ENCODE measurements at regions of chr2 and their contacts with region 1.

Region 1: GRCh38 chr2:43158259-43158880 is 68.0 kb downstream of the ZFP36L2 start:
- DNase-seq: peak in 5 of 9 experiments; percentile 53 to 81 (median 64)
- ATAC-seq: peak; percentile 48
- H3K4me3 ChIP-seq: peak overlapping the region; percentile 9 to 16
- H3K4me3 Mint-ChIP-seq: peak overlapping the region; percentile 75
- H3K27ac ChIP-seq: peak overlapping the region; percentile 60 to 90
- H3K27ac Mint-ChIP-seq: peak overlapping the region; percentile 96
- H3K4me1 ChIP-seq: peaks cover 88% of the 10 kb centered on the region
- H3K4me1 Mint-ChIP-seq: peaks cover 85% of the 10 kb centered on the region
- H3K27me3 ChIP-seq: no peaks in the 10 kb centered on the region
- H3K27me3 Mint-ChIP-seq: no peaks in the 10 kb centered on the region
- CTCF ChIP-seq: no peak

Region 2: GRCh38 chr2:42532397-42532796 is 626.0 kb before region 1 on chr2:
- CTCF ChIA-PET with region 1: no interaction called
- POLR2A ChIA-PET with region 1: no interaction called
- intact Hi-C with region 1: no loop called
- DNase-seq: no peak
- ATAC-seq: no peak
- H3K4me3 ChIP-seq: no peak overlapping the region
- H3K4me3 Mint-ChIP-seq: no peak overlapping the region
- H3K27ac ChIP-seq: no peak overlapping the region
- H3K27ac Mint-ChIP-seq: no peak overlapping the region
- H3K4me1 ChIP-seq: no peaks in the 10 kb centered on the region
- H3K4me1 Mint-ChIP-seq: no peaks in the 10 kb centered on the region
- H3K27me3 ChIP-seq: no peaks in the 10 kb centered on the region
- H3K27me3 Mint-ChIP-seq: no peaks in the 10 kb centered on the region
- CTCF ChIP-seq: no peak

Region 3: GRCh38 chr2:43136876-43137275 is 21.5 kb before region 1 on chr2:
- CTCF ChIA-PET with region 1: interaction called, 5 read pairs
- POLR2A ChIA-PET with region 1: interaction called, 7 read pairs
- intact Hi-C with region 1: loop called (anchors 1 kb)
- DNase-seq: peak; percentile 68 to 97 (median 84)
- ATAC-seq: peak; percentile 67
- H3K4me3 ChIP-seq: peak overlapping the region in 1 of 2 experiments; percentile 3
- H3K4me3 Mint-ChIP-seq: peak overlapping the region; percentile 62
- H3K27ac ChIP-seq: peak overlapping the region; percentile 88 to 90
- H3K27ac Mint-ChIP-seq: peak overlapping the region; percentile 100
- H3K4me1 ChIP-seq: peaks cover 95% of the 10 kb centered on the region
- H3K4me1 Mint-ChIP-seq: peaks cover 85% of the 10 kb centered on the region
- H3K27me3 ChIP-seq: no peaks in the 10 kb centered on the region
- H3K27me3 Mint-ChIP-seq: no peaks in the 10 kb centered on the region
- CTCF ChIP-seq: peak; percentile 21

Region 4: GRCh38 chr2:43169987-43170386 is 11.6 kb after region 1 on chr2:
- CTCF ChIA-PET with region 1: interaction called, 41 read pairs
- POLR2A ChIA-PET with region 1: interaction called, 6 read pairs
- intact Hi-C with region 1: loop called (anchors 1 kb)
- DNase-seq: peak; percentile 54 to 86 (median 72)
- ATAC-seq: peak; percentile 15
- H3K4me3 ChIP-seq: peak overlapping the region; percentile 27 to 32
- H3K4me3 Mint-ChIP-seq: peak overlapping the region; percentile 86
- H3K27ac ChIP-seq: peak overlapping the region; percentile 47 to 67
- H3K27ac Mint-ChIP-seq: peak overlapping the region; percentile 99
- H3K4me1 ChIP-seq: peaks cover 70% of the 10 kb centered on the region
- H3K4me1 Mint-ChIP-seq: peaks cover 82% of the 10 kb centered on the region
- H3K27me3 ChIP-seq: no peaks in the 10 kb centered on the region
- H3K27me3 Mint-ChIP-seq: no peaks in the 10 kb centered on the region
- CTCF ChIP-seq: peak; percentile 59

Region 5: GRCh38 chr2:43194121-43194869 is 35.9 kb after region 1 on chr2:
- CTCF ChIA-PET with region 1: no interaction called
- POLR2A ChIA-PET with region 1: no interaction called
- intact Hi-C with region 1: loop called (anchors 1 kb)
- DNase-seq: no peak
- ATAC-seq: peak; percentile 0
- H3K4me3 ChIP-seq: peak overlapping the region; percentile 40 to 52
- H3K4me3 Mint-ChIP-seq: peak overlapping the region; percentile 83
- H3K27ac ChIP-seq: peak overlapping the region; percentile 68 to 88
- H3K27ac Mint-ChIP-seq: peak overlapping the region; percentile 98
- H3K4me1 ChIP-seq: peaks cover 65% of the 10 kb centered on the region
- H3K4me1 Mint-ChIP-seq: peaks cover 61% of the 10 kb centered on the region
- H3K27me3 ChIP-seq: no peaks in the 10 kb centered on the region
- H3K27me3 Mint-ChIP-seq: no peaks in the 10 kb centered on the region
- CTCF ChIP-seq: no peak

Region 6: GRCh38 chr2:43461453-43462073 is 303.2 kb after region 1 on chr2:
- CTCF ChIA-PET with region 1: no interaction called
- POLR2A ChIA-PET with region 1: no interaction called
- intact Hi-C with region 1: no loop called
- DNase-seq: no peak
- ATAC-seq: no peak
- H3K4me3 ChIP-seq: no peak overlapping the region
- H3K4me3 Mint-ChIP-seq: no peak overlapping the region
- H3K27ac ChIP-seq: no peak overlapping the region
- H3K27ac Mint-ChIP-seq: no peak overlapping the region
- H3K4me1 ChIP-seq: no peaks in the 10 kb centered on the region
- H3K4me1 Mint-ChIP-seq: peaks cover 9% of the 10 kb centered on the region
- H3K27me3 ChIP-seq: no peaks in the 10 kb centered on the region
- H3K27me3 Mint-ChIP-seq: no peaks in the 10 kb centered on the region
- CTCF ChIP-seq: no peak

Measured in CD8-positive, alpha-beta T cell (primary cell).